Transverse colon (tissue), 4 donors: ENCODE measurements at regions of chr20 and their contacts with region 1.

Region 1: DNA sequence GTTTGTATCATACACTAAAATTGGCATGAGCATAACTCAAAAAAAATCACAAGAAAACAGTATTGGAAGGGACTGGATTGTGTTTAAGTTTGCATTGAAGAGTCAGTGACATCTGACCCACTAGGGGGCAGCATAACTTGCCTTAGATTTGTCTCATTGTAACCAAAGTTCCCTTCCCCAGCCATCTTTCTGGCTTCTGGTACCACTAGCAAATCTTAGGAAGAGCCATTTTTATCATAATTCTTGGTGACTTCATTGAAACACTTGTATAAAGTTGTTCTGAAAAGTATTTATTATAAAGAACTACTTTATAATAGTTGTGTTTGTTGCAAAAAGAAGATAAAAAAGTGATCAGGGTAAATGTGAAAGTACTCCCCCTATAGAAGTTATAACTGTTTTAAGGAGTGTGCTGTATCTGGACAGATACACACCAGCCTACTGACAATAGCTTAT is 7.7 kb downstream of the CSTF1 start:
- DNase-seq: peak; percentile 38
- H3K4me3 ChIP-seq: no peak overlapping the region
- H3K27ac ChIP-seq: no peak overlapping the region
- H3K4me1 ChIP-seq: peaks cover 0 to 7% (median 0%) of the 10 kb centered on the region in 4 donors
- H3K27me3 ChIP-seq: no peaks in the 10 kb centered on the region
- CTCF ChIP-seq: peak; percentile 59 to 84 (median 74)
- EP300 ChIP-seq: no peak
- POLR2A ChIP-seq: no peak

Region 2: GRCh38 chr20:56328853-56329252 is 71.3 kb before region 1 on chr20:
- in situ Hi-C with region 1: no loop called
- intact Hi-C with region 1: no loop called
- DNase-seq: no peak
- H3K4me3 ChIP-seq: no peak overlapping the region
- H3K27ac ChIP-seq: no peak overlapping the region
- H3K4me1 ChIP-seq: no peaks in the 10 kb centered on the region
- H3K27me3 ChIP-seq: peaks cover 4% of the 10 kb centered on the region
- CTCF ChIP-seq: no peak
- EP300 ChIP-seq: no peak
- POLR2A ChIP-seq: no peak

Region 3: GRCh38 chr20:56460459-56460858 is 60.3 kb after region 1 on chr20:
- in situ Hi-C with region 1: loop called in 2 of 4 experiments (anchors 5 to 10 kb)
- intact Hi-C with region 1: no loop called
- DNase-seq: no peak
- H3K4me3 ChIP-seq: no peak overlapping the region
- H3K27ac ChIP-seq: no peak overlapping the region
- H3K4me1 ChIP-seq: no peaks in the 10 kb centered on the region
- H3K27me3 ChIP-seq: no peaks in the 10 kb centered on the region
- CTCF ChIP-seq: no peak
- EP300 ChIP-seq: no peak
- POLR2A ChIP-seq: no peak

Region 4: GRCh38 chr20:56468316-56469082 is 68.4 kb after region 1 on chr20 and contains the start of gene RTF2:
- in situ Hi-C with region 1: loop called in 2 of 4 experiments (anchors 5 to 10 kb)
- intact Hi-C with region 1: no loop called
- DNase-seq: peak; percentile 96
- H3K4me3 ChIP-seq: peak within 1 kb of the TSS; percentile 63 to 76 (median 68)
- H3K27ac ChIP-seq: peak within 1 kb of the TSS; percentile 80 to 87 (median 87)
- H3K4me1 ChIP-seq: peaks cover 10 to 20% (median 10%) of the 10 kb centered on the region in 4 donors
- H3K27me3 ChIP-seq: no peaks in the 10 kb centered on the region
- CTCF ChIP-seq: no peak
- EP300 ChIP-seq: no peak
- POLR2A ChIP-seq: peak; percentile 70
- total RNA-seq, gene RTF2: 49.5 to 130 (median 50.5) TPM

Region 5: GRCh38 chr20:56504373-56505005 is 104.4 kb after region 1 on chr20:
- in situ Hi-C with region 1: no loop called
- intact Hi-C with region 1: no loop called
- DNase-seq: no peak
- H3K4me3 ChIP-seq: no peak overlapping the region
- H3K27ac ChIP-seq: no peak overlapping the region
- H3K4me1 ChIP-seq: no peaks in the 10 kb centered on the region
- H3K27me3 ChIP-seq: no peaks in the 10 kb centered on the region
- CTCF ChIP-seq: peak in 2 of 5 experiments; percentile 14 to 21
- EP300 ChIP-seq: no peak
- POLR2A ChIP-seq: no peak

Region 6: GRCh38 chr20:56540420-56540819 is 140.3 kb after region 1 on chr20:
- in situ Hi-C with region 1: no loop called
- intact Hi-C with region 1: no loop called
- DNase-seq: no peak
- H3K4me3 ChIP-seq: no peak overlapping the region
- H3K27ac ChIP-seq: no peak overlapping the region
- H3K4me1 ChIP-seq: no peaks in the 10 kb centered on the region
- H3K27me3 ChIP-seq: no peaks in the 10 kb centered on the region
- CTCF ChIP-seq: no peak
- EP300 ChIP-seq: no peak
- POLR2A ChIP-seq: no peak